AG04450 (cell line): ENCODE measurements at regions of chr17 and their contacts with region 1.

Region 1: DNA sequence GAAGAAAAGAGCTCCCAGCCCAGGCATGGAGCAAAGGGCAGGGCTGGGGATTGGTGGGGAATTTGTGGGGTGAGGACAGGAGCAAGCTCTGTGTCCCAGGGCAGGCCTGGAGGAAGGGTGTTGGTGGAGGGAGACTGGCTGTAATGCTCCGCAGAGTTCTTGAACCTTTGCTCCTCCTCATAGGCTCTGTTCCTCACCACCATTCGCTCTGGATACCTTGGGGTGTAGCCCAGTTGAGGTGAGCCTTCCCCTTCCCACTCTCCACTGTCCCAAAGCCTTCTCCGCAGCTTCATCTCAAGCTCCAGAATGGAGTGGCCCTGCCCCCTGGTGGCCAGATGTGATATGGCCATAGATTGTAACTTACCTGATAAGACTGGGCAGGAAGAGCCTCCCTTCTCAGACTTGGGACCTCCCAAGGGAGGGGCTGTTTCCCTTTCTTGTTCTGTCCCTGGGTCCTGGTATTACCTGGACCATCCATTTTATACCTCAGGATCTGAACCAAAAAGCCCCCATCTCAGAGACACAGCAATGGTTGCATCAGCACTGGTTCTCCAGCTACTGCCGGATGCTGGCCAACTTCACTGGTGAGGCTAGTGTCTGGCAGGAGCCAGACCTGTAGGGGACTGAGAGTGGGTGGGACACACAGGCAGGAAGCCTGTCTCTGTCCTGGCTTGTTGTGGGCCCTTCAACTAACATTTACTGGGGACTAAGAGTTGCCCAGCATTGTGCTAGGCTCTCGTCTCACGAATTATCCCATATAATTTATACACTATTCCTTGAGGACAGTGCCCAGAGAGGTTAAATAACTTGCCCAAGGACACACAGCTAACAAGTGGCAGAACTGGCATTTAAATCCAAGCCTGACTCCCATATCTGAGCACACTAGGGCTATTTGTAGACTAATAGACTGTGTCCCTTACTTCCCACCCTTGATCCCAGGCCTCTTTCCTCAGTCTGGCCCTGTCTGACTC is 19.1 kb upstream of the STAC2 start:
- DNase-seq: peak; percentile 54
- H3K4me3 ChIP-seq: no peak overlapping the region
- H3K27ac ChIP-seq: no peak overlapping the region
- H3K27me3 ChIP-seq: no peaks in the 10 kb centered on the region
- CTCF ChIP-seq: peak; percentile 97

Region 2: DNA sequence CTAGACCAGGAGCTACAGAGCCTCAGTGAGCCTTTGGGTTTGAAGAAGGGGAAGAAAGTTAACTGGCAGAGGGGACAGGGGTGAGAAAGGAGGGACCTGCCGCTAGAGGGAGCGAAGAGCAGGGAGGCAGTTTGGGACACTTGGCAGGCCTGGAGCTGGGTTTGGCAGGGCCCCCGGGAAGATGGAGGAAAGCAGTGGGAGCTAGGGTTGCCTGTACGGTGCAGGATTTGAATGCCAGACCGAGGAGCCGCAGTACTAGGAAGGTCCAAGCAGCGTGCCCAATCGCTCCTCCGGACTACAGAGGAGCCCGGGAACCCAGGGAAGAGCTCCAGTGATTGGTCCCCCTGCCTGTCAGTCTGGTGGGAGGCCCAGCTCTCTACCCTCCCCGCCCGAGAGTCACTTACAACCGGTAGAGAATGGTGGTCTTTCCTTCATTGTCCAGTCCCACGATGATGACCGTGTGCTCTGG is 80.2 kb before region 1 on chr17:
- CTCF ChIA-PET with region 1: interaction called, 25 read pairs
- POLR2A ChIA-PET with region 1: interaction called, 3 read pairs
- DNase-seq: peak; percentile 76
- H3K4me3 ChIP-seq: peak overlapping the region; percentile 63
- H3K27ac ChIP-seq: no peak overlapping the region
- H3K27me3 ChIP-seq: peaks cover 32% of the 10 kb centered on the region
- CTCF ChIP-seq: peak; percentile 87

Region 3: GRCh38 chr17:39174907-39175694 is 69.8 kb before region 1 on chr17:
- CTCF ChIA-PET with region 1: interaction called, 14 read pairs
- POLR2A ChIA-PET with region 1: no interaction called
- DNase-seq: no peak
- H3K4me3 ChIP-seq: no peak overlapping the region
- H3K27ac ChIP-seq: no peak overlapping the region
- H3K27me3 ChIP-seq: no peaks in the 10 kb centered on the region
- CTCF ChIP-seq: peak; percentile 78

Region 4: GRCh38 chr17:39194089-39194984 is 50.5 kb before region 1 on chr17:
- CTCF ChIA-PET with region 1: interaction called, 18 read pairs
- POLR2A ChIA-PET with region 1: no interaction called
- DNase-seq: no peak
- H3K4me3 ChIP-seq: no peak overlapping the region
- H3K27ac ChIP-seq: no peak overlapping the region
- H3K27me3 ChIP-seq: no peaks in the 10 kb centered on the region
- CTCF ChIP-seq: peak; percentile 52

Region 5: GRCh38 chr17:39209317-39210092 is 35.4 kb before region 1 on chr17:
- CTCF ChIA-PET with region 1: interaction called, 31 read pairs
- POLR2A ChIA-PET with region 1: interaction called, 6 read pairs
- DNase-seq: no peak
- H3K4me3 ChIP-seq: peak overlapping the region; percentile 56
- H3K27ac ChIP-seq: peak overlapping the region; percentile 11
- H3K27me3 ChIP-seq: peaks cover under 1% of the 10 kb centered on the region
- CTCF ChIP-seq: no peak

Region 6: GRCh38 chr17:39219647-39220154 is 25.2 kb before region 1 on chr17:
- CTCF ChIA-PET with region 1: no interaction called
- POLR2A ChIA-PET with region 1: no interaction called
- DNase-seq: no peak
- H3K4me3 ChIP-seq: no peak overlapping the region
- H3K27ac ChIP-seq: no peak overlapping the region
- H3K27me3 ChIP-seq: peaks cover 56% of the 10 kb centered on the region
- CTCF ChIP-seq: no peak

Region 7: DNA sequence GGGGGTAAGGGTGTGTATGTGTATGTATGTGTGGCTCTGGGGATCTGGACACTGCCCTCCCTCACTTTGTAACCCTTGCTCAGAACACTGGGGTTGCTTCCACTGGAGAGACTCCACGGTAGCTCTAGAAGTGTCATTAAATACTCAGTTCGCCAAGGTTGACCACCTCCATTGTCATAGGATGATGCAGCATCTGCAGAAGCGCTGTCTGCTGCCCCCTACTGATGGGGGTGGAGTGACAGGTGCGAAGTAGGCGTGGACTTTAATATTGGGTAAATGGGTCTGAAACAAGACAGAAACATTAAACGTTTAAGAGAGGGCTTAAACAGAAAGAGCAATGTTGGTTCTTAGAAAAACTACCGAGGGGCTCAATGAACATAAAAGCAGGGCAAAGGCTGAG is 16.4 kb after region 1 on chr17:
- CTCF ChIA-PET with region 1: interaction called, 19 read pairs
- POLR2A ChIA-PET with region 1: no interaction called
- DNase-seq: no peak
- H3K4me3 ChIP-seq: no peak overlapping the region
- H3K27ac ChIP-seq: no peak overlapping the region
- H3K27me3 ChIP-seq: no peaks in the 10 kb centered on the region
- CTCF ChIP-seq: 0 out of 2 replicates have a peak, but pooled peaks have one; percentile 17